A549 (cell line): ENCODE measurements at regions of chr6 and their contacts with region 1.

Region 1: DNA sequence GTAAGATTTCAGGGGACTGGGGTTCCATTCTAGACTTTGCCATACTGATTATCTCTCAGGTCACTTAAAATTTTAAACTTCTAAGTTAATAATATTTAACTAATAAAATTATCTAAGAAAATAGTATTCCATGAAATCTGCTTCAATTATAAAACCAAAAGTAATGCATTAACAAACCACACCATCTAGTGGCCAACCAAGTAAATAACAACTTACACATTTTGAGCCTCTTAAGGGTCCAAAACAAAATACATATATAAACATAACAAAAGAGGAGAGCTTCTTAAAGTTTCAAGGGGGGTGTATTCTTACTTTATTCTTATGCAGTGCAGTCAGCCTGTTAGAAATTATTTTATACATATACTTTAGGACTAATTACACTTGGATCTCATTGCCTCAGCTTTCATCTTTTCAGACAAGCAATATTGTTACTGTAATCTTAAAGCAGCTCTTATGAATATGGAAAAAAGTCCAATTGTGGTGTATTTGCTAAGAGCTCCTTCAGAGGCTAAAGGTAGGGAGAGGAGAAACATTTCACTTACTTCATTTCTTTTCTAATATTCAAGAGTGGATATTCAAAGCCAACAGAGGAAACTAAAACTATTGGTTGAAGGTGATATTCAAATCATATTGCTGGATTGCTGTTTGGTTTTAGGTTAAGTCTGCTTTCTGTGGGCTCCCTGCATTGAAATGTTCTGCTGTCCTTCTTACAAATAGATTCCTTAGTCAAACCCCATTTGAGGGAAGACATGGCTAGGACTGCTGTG is 199.7 kb upstream of the SIM1 start:
- DNase-seq: peak in 1 of 2 experiments; percentile 20
- ATAC-seq: no peak
- H3K4me3 ChIP-seq: no peak overlapping the region
- H3K27ac ChIP-seq: no peak overlapping the region
- H3K4me1 ChIP-seq: peaks cover 6% of the 10 kb centered on the region; the same call in 1 of the 3 replicates
- CTCF ChIP-seq: peak; percentile 63
- EP300 ChIP-seq: no peak
- POLR2A ChIP-seq: no peak
- RAD21 ChIP-seq: peak; percentile 44 to 54

Region 2: GRCh38 chr6:100105138-100105753 is 559.2 kb before region 1 on chr6:
- CTCF ChIA-PET with region 1: interaction called, 27 read pairs
- POLR2A ChIA-PET with region 1: no interaction called
- DNase-seq: no peak
- ATAC-seq: no peak
- H3K4me3 ChIP-seq: no peak overlapping the region
- H3K27ac ChIP-seq: no peak overlapping the region
- H3K4me1 ChIP-seq: no peaks in the 10 kb centered on the region
- CTCF ChIP-seq: no peak
- EP300 ChIP-seq: no peak
- POLR2A ChIP-seq: no peak
- RAD21 ChIP-seq: no peak